CD8-positive, alpha-beta T cell (primary cell): ENCODE measurements at regions of chr4 and their contacts with region 1.

Region 1: GRCh38 chr4:98467627-98468072 is 190.8 kb downstream of the TSPAN5 start:
- DNase-seq: peak; percentile 31 to 84 (median 67)
- ATAC-seq: peak; percentile 91
- H3K4me3 ChIP-seq: peak overlapping the region; percentile 32 to 43
- H3K4me3 Mint-ChIP-seq: peak overlapping the region; percentile 77
- H3K27ac ChIP-seq: no peak overlapping the region
- H3K27ac Mint-ChIP-seq: no peak overlapping the region
- H3K4me1 ChIP-seq: peaks cover 14% of the 10 kb centered on the region
- H3K4me1 Mint-ChIP-seq: peaks cover 28% of the 10 kb centered on the region
- H3K27me3 ChIP-seq: no peaks in the 10 kb centered on the region
- H3K27me3 Mint-ChIP-seq: no peaks in the 10 kb centered on the region
- CTCF ChIP-seq: peak; percentile 68

Region 2: DNA sequence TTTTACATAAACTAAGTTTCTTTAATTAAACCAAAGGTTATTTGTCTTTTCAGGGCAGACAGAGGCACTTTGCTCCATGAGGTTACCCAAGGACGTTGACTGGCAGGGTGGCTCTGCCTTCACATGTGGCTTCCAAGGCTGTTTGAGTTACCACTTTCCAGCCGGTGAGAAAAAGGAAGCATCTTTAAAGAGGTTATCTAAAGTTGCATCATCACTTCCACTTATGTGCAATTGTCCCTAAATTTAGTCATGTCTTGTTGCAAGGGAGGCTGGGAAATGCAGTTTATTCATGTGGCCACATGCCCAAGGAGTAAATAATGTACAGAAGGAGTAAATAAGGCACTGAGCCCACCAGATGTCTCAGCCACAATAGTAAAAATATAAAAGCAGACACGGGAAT is 235.4 kb before region 1 on chr4:
- CTCF ChIA-PET with region 1: no interaction called
- POLR2A ChIA-PET with region 1: no interaction called
- intact Hi-C with region 1: no loop called
- DNase-seq: peak in 1 of 9 experiments; percentile 7
- ATAC-seq: no peak
- H3K4me3 ChIP-seq: no peak overlapping the region
- H3K4me3 Mint-ChIP-seq: no peak overlapping the region
- H3K27ac ChIP-seq: no peak overlapping the region
- H3K27ac Mint-ChIP-seq: no peak overlapping the region
- H3K4me1 ChIP-seq: no peaks in the 10 kb centered on the region
- H3K4me1 Mint-ChIP-seq: no peaks in the 10 kb centered on the region
- H3K27me3 ChIP-seq: no peaks in the 10 kb centered on the region
- H3K27me3 Mint-ChIP-seq: no peaks in the 10 kb centered on the region
- CTCF ChIP-seq: no peak

Region 3: GRCh38 chr4:98305576-98305975 is 162.1 kb before region 1 on chr4:
- CTCF ChIA-PET with region 1: no interaction called
- POLR2A ChIA-PET with region 1: no interaction called
- intact Hi-C with region 1: no loop called
- DNase-seq: no peak
- ATAC-seq: no peak
- H3K4me3 ChIP-seq: no peak overlapping the region
- H3K4me3 Mint-ChIP-seq: no peak overlapping the region
- H3K27ac ChIP-seq: no peak overlapping the region
- H3K27ac Mint-ChIP-seq: no peak overlapping the region
- H3K4me1 ChIP-seq: no peaks in the 10 kb centered on the region
- H3K4me1 Mint-ChIP-seq: peaks cover 15% of the 10 kb centered on the region
- H3K27me3 ChIP-seq: no peaks in the 10 kb centered on the region
- H3K27me3 Mint-ChIP-seq: no peaks in the 10 kb centered on the region
- CTCF ChIP-seq: no peak

Region 4: GRCh38 chr4:98452091-98452490 is 15.6 kb before region 1 on chr4:
- CTCF ChIA-PET with region 1: interaction called, 11 read pairs
- POLR2A ChIA-PET with region 1: interaction called, 3 read pairs
- intact Hi-C with region 1: no loop called
- DNase-seq: no peak
- ATAC-seq: no peak
- H3K4me3 ChIP-seq: no peak overlapping the region
- H3K4me3 Mint-ChIP-seq: no peak overlapping the region
- H3K27ac ChIP-seq: no peak overlapping the region
- H3K27ac Mint-ChIP-seq: no peak overlapping the region
- H3K4me1 ChIP-seq: peaks cover 23% of the 10 kb centered on the region
- H3K4me1 Mint-ChIP-seq: peaks cover 29% of the 10 kb centered on the region
- H3K27me3 ChIP-seq: no peaks in the 10 kb centered on the region
- H3K27me3 Mint-ChIP-seq: no peaks in the 10 kb centered on the region
- CTCF ChIP-seq: no peak

Region 5: GRCh38 chr4:98527534-98528269 is 60.1 kb after region 1 on chr4:
- CTCF ChIA-PET with region 1: no interaction called
- POLR2A ChIA-PET with region 1: no interaction called
- intact Hi-C with region 1: no loop called
- DNase-seq: no peak
- ATAC-seq: no peak
- H3K4me3 ChIP-seq: no peak overlapping the region
- H3K4me3 Mint-ChIP-seq: no peak overlapping the region
- H3K27ac ChIP-seq: no peak overlapping the region
- H3K27ac Mint-ChIP-seq: no peak overlapping the region
- H3K4me1 ChIP-seq: no peaks in the 10 kb centered on the region
- H3K4me1 Mint-ChIP-seq: peaks cover 25% of the 10 kb centered on the region
- H3K27me3 ChIP-seq: no peaks in the 10 kb centered on the region
- H3K27me3 Mint-ChIP-seq: no peaks in the 10 kb centered on the region
- CTCF ChIP-seq: no peak

Region 6: DNA sequence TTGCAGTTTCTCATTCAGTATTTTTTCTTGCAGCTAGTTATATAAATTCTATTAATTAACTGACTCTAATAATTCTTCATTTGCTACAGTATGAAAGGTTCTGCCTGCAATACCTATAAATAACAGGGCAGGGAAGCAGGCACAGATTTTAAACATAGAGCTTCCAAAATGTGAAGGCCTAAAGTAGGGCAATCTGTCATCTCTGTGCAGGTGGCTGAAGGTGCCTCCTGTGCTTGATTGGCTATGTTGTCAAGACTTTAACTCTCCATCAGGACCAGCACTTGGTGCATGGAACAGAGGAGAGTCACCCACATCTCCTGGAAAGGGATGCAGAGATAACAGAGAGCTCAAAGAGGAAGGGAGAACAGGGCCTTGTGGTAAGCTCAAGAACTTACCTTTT is 266.0 kb after region 1 on chr4:
- CTCF ChIA-PET with region 1: interaction called, 4 read pairs
- POLR2A ChIA-PET with region 1: no interaction called
- intact Hi-C with region 1: loop called in 1 of 2 experiments (anchors 5 kb)
- DNase-seq: no peak
- ATAC-seq: no peak
- H3K4me3 ChIP-seq: no peak overlapping the region
- H3K4me3 Mint-ChIP-seq: no peak overlapping the region
- H3K27ac ChIP-seq: no peak overlapping the region
- H3K27ac Mint-ChIP-seq: no peak overlapping the region
- H3K4me1 ChIP-seq: no peaks in the 10 kb centered on the region
- H3K4me1 Mint-ChIP-seq: peaks cover under 1% of the 10 kb centered on the region
- H3K27me3 ChIP-seq: no peaks in the 10 kb centered on the region
- H3K27me3 Mint-ChIP-seq: no peaks in the 10 kb centered on the region
- CTCF ChIP-seq: no peak

Region 7: GRCh38 chr4:98850937-98851336 is 383.3 kb after region 1 on chr4:
- CTCF ChIA-PET with region 1: interaction called, 4 read pairs
- POLR2A ChIA-PET with region 1: no interaction called
- intact Hi-C with region 1: loop called in 1 of 2 experiments (anchors 1 kb)
- DNase-seq: no peak
- ATAC-seq: no peak
- H3K4me3 ChIP-seq: no peak overlapping the region
- H3K4me3 Mint-ChIP-seq: no peak overlapping the region
- H3K27ac ChIP-seq: no peak overlapping the region
- H3K27ac Mint-ChIP-seq: no peak overlapping the region
- H3K4me1 ChIP-seq: no peaks in the 10 kb centered on the region
- H3K4me1 Mint-ChIP-seq: peaks cover 2% of the 10 kb centered on the region
- H3K27me3 ChIP-seq: peaks cover 0 to 2% of the 10 kb centered on the region in 2 experiments
- H3K27me3 Mint-ChIP-seq: peaks cover 12% of the 10 kb centered on the region
- CTCF ChIP-seq: no peak

Region 8: DNA sequence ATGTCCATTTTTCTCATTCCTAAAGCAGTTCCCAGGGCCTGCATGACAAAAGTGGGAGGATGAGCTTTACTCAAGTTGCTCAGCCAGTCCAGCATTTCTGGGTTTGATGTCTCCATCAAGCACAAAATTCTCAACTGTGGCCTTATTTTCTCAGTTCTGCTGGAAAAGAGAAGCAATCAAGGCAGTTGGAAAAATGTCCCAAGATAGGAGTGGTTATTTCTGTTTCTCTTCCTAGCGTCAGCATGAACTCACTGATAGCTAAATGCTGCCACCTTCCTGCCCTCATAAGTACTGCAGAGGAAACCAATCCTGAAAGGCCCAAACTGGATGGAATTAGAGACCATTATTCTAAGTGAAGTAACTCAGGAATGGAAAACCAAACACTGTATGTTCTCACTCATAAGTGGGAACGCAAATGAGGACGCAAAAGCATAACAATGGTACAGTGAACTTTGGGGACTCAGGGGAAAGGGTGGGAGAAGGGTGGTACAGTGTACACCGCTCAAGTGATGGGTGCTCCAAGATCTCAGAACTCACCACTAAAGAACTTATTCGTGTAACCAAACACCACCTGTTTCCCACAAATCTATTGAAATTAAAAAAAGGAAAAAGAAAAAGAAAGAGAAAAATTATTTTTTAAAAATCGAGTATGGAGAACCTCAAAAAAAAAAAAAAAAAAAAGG is 937.9 kb after region 1 on chr4:
- CTCF ChIA-PET with region 1: interaction called, 13 read pairs
- POLR2A ChIA-PET with region 1: no interaction called
- intact Hi-C with region 1: loop called (anchors 1 to 2 kb)
- DNase-seq: peak; percentile 34 to 71 (median 56)
- ATAC-seq: peak; percentile 70
- H3K4me3 ChIP-seq: no peak overlapping the region
- H3K4me3 Mint-ChIP-seq: no peak overlapping the region
- H3K27ac ChIP-seq: no peak overlapping the region
- H3K27ac Mint-ChIP-seq: no peak overlapping the region
- H3K4me1 ChIP-seq: no peaks in the 10 kb centered on the region
- H3K4me1 Mint-ChIP-seq: no peaks in the 10 kb centered on the region
- H3K27me3 ChIP-seq: no peaks in the 10 kb centered on the region
- H3K27me3 Mint-ChIP-seq: no peaks in the 10 kb centered on the region
- CTCF ChIP-seq: peak; percentile 93